ENCODE measurements at regions of chr4 and their contacts with region 1.

Region 1: DNA sequence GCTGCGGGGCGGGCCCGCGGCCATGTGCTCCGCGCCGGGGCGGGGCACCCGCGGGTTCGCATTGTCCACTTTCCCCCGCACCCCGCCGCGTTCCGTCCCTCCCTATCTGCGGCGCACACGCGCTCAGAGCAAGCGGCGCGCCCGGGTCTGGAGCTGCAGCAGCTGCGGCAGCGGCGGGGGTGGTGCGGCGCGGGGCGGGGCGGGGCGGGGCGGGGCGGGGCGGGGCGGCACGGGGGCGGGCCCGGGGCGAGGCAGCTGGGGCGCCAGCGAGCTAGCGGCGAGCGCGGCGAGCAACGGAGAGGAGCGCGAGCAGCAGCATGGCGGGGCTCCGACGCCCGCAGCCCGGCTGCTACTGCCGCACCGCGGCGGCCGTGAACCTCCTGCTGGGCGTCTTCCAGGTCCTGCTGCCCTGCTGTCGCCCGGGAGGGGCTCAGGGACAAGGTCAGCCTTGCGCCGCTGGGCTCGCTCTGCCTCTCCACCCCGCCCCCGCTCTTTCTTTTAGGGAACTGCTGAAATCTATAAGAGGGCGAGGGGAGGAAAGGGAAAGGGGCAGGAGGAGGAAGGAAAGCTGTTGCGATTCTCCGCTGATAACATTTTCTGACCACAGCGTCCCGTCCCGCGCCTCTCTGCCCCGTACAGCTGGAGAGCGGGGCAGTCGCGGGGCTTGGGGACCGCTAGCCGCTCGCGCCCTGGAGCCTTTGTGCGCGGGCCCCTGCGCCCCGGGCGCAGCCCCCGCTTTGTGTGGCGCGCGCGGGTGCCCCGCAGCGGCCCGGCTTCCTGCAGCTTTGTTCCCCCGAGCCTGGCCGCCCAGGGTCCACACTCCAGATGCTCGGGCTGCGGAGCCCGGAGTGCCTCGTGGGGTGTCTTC is at the start of gene TMEM131L:
- DNase-seq: peak; percentile 67
- H3K4me3 Mint-ChIP-seq: peak within 1 kb of the TSS; percentile 95
- H3K27ac Mint-ChIP-seq: peak within 1 kb of the TSS; percentile 96
- H3K4me1 Mint-ChIP-seq: peaks cover 35% of the 10 kb centered on the region
- H3K27me3 Mint-ChIP-seq: no peaks in the 10 kb centered on the region
- total RNA-seq, gene TMEM131L: 37.6 to 41.6 TPM

Region 2: DNA sequence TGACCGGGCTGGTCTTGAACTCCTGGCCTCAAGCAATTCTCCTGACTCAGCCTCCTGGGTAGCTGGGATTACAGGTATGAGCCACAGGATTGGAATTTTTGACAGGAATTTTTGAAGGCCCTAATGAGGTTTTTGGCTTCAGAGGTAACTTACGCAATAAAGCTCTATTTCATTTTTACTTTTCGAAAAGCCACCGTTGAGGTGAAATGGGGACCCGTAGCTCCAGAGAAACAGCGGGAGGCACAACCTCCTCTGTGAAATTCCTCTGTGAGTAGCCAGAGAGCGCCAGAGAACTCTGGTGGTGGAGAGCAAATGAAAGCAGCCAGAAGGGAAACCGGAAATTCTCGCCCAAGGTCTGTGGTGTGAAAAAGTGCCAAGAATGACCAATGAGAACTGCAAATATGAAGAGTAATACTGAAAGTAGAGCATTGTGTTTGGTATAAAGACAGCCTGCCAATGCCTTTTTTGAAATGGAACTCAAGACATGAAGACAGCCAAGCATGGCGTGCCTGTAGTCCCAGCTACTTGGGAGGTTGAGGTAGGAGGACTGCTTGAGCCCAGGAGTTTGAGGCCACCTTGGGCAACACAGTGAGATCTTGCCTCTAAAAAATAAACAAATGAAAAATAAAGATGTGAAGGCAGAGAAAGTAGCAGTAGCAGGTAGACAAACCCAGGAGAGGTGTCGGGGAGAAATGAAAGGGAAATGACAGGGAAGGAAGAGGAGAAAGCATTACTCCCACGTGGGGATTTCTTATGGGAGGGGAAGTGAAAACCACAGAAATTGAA is 33.2 kb before region 1 on chr4:
- CTCF ChIA-PET with region 1: interaction called, 8 read pairs
- intact Hi-C with region 1: loop called (anchors 1 kb)
- DNase-seq: peak; percentile 89
- H3K4me3 Mint-ChIP-seq: peak overlapping the region; percentile 78
- H3K27ac Mint-ChIP-seq: peak overlapping the region; percentile 91
- H3K4me1 Mint-ChIP-seq: peaks cover 76% of the 10 kb centered on the region
- H3K27me3 Mint-ChIP-seq: no peaks in the 10 kb centered on the region

Region 3: DNA sequence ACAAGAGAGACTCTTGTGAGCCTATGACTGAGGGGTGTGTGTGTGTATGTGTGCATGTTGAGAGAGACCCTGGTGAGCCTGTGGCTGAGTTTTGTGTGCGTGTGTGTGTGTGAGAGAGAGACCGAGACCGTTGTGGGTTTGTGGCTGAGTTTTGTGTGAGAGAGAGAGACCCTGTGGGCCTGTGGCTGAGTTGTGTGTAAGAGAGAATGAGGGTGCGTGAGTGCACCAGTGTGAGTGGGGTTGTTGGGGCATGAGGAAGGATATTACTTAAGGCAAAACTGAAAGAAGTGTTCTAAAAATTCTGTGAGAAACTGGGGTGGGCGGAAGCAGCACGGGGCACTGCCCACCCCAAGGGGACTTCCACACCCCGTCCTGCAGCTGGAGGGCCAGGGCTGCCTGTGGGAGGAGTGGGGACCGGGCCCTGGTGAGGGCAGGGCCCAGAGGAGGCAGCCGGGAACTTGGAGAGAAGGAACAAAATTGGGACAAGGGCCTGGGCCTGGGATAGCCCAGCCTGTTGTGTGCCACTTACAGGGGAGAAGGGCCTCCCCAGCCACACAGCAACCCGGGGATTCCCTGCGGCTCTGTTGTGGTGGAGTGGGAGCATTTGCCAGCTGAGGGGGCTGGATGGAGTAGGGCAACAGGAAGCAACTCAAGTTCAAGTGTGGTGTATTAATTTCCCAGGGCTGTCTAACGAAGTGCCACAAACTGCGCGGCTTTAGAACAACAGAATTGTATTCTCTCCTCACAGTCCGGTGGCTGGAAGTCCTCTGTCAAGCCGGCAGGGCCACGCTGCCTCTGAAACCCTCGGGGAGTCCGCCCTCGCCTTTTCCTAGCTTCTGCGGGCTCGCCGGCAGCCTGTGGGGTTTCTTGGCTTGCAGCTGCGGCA is 21.9 kb after region 1 on chr4:
- CTCF ChIA-PET with region 1: interaction called, 19 read pairs
- intact Hi-C with region 1: loop called (anchors 1 kb)
- DNase-seq: peak; percentile 86
- H3K4me3 Mint-ChIP-seq: peak overlapping the region; percentile 69
- H3K27ac Mint-ChIP-seq: peak overlapping the region; percentile 95
- H3K4me1 Mint-ChIP-seq: peaks cover 81% of the 10 kb centered on the region
- H3K27me3 Mint-ChIP-seq: no peaks in the 10 kb centered on the region

Region 4: DNA sequence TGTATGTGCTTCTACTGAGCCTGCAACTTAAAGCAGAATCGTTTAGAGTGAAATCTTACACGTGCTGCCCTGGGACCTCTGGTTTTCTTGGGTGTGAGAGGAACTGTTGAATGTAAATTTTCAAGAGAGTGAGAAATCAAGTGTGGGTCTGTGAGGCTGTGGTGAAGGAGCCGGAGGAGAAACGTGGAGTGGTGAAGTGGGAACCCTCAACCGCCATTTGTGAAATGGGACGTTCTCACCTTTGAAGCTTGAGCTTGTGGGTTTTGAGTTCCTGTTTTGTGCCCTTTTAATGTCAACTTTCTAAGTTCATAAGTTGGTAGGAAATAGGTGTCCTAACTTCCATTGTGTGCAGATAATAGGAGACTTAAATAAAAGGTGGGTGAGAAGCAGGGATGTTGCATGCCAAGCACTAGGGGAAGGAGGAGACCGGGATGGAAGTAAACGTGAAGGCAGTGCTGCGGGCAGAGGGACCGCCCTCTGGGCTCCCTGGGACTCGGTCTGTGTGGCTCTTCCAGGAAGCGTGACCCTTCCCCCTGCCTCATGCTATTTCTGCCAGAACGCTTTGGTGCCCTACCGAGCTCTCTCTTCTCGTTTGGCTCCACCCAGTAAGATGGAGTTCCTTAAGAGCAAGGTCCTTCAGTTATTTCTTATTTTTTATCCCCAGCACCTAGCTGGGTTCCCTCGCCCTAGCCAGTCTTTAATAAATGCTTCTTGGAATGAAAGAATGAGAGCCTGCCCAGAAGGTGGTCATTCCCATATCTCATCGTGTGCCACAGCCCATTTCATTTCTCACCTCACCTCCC is 55.9 kb after region 1 on chr4:
- CTCF ChIA-PET with region 1: interaction called, 7 read pairs
- intact Hi-C with region 1: loop called (anchors 1 kb)
- DNase-seq: peak; percentile 74
- H3K4me3 Mint-ChIP-seq: peak overlapping the region; percentile 69
- H3K27ac Mint-ChIP-seq: peak overlapping the region; percentile 97
- H3K4me1 Mint-ChIP-seq: peaks cover 93% of the 10 kb centered on the region
- H3K27me3 Mint-ChIP-seq: no peaks in the 10 kb centered on the region

Region 5: GRCh38 chr4:153573881-153574802 is 107.8 kb after region 1 on chr4:
- CTCF ChIA-PET with region 1: interaction called, 19 read pairs
- intact Hi-C with region 1: loop called (anchors 1 kb)
- DNase-seq: peak; percentile 78
- H3K4me3 Mint-ChIP-seq: no peak overlapping the region
- H3K27ac Mint-ChIP-seq: peak overlapping the region; percentile 74
- H3K4me1 Mint-ChIP-seq: peaks cover 76% of the 10 kb centered on the region
- H3K27me3 Mint-ChIP-seq: no peaks in the 10 kb centered on the region